Endothelial cell of umbilical vein (primary cell): ENCODE measurements at regions of chr11 and their contacts with region 1.

Region 1: DNA sequence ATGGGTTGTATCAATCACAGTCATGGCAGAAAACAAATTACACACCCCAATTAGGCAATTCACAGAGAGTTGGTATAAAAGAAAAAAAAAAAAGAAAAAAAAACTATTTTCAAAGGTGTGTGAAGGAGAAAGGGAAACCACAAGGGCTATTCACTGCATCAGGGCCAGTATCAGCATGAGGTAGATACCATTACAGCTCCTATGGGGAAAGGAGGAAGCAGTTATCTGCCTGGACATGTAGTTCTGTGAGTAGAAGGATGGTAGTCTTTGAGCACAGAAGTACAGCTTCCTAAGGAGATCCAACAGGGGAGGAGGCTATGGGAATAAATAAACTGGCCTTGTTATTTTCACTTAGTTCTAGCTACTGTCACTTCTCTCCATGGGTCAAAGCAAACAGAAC is 746.1 kb downstream of the LUZP2 start:
- DNase-seq: no peak
- H3K4me3 ChIP-seq: no peak overlapping the region
- H3K27ac ChIP-seq: no peak overlapping the region
- H3K4me1 ChIP-seq: no peaks in the 10 kb centered on the region
- H3K27me3 ChIP-seq: no peaks in the 10 kb centered on the region
- CTCF ChIP-seq: no peak
- POLR2A ChIP-seq: no peak

Region 2: GRCh38 chr11:25183411-25183810 is 59.5 kb before region 1 on chr11:
- CTCF ChIA-PET with region 1: no interaction called
- POLR2A ChIA-PET with region 1: no interaction called
- dilution Hi-C with region 1: no loop called
- intact Hi-C with region 1: loop called (anchors 10 kb)
- DNase-seq: no peak
- H3K4me3 ChIP-seq: no peak overlapping the region
- H3K27ac ChIP-seq: no peak overlapping the region
- H3K4me1 ChIP-seq: no peaks in the 10 kb centered on the region
- H3K27me3 ChIP-seq: no peaks in the 10 kb centered on the region
- CTCF ChIP-seq: no peak
- POLR2A ChIP-seq: no peak

Region 3: GRCh38 chr11:25200925-25201324 is 42.0 kb before region 1 on chr11:
- CTCF ChIA-PET with region 1: no interaction called
- POLR2A ChIA-PET with region 1: no interaction called
- dilution Hi-C with region 1: no loop called
- intact Hi-C with region 1: no loop called
- DNase-seq: no peak
- H3K4me3 ChIP-seq: no peak overlapping the region
- H3K27ac ChIP-seq: no peak overlapping the region
- H3K4me1 ChIP-seq: no peaks in the 10 kb centered on the region
- H3K27me3 ChIP-seq: no peaks in the 10 kb centered on the region
- CTCF ChIP-seq: no peak
- POLR2A ChIP-seq: no peak